T-cell (primary cell): ENCODE measurements at regions of chr4 and their contacts with region 1.

Region 1: GRCh38 chr4:81471588-81472288 is at the start of gene RASGEF1B:
- DNase-seq: peak; percentile 85 to 97 (median 94)
- ATAC-seq: peak; percentile 90 to 97 (median 93)
- H3K4me3 ChIP-seq: peak within 1 kb of the TSS; percentile 87 to 92
- H3K4me3 Mint-ChIP-seq: peak within 1 kb of the TSS; percentile 89 to 98 (median 97)
- H3K27ac ChIP-seq: peak within 1 kb of the TSS; percentile 99
- H3K27ac Mint-ChIP-seq: peak within 1 kb of the TSS; percentile 96 to 98
- H3K4me1 ChIP-seq: peaks cover 29 to 32% of the 10 kb centered on the region in 2 experiments
- H3K4me1 Mint-ChIP-seq: peaks cover 40 to 58% (median 43%) of the 10 kb centered on the region in 3 donors
- H3K27me3 ChIP-seq: peaks cover 0 to 7% of the 10 kb centered on the region in 2 experiments
- H3K27me3 Mint-ChIP-seq: no peaks in the 10 kb centered on the region
- total RNA-seq, gene RASGEF1B: 7.3 to 54.0 (median 8.1) TPM

Region 2: GRCh38 chr4:81272671-81273070 is 199.1 kb before region 1 on chr4:
- CTCF ChIA-PET with region 1: no interaction called
- POLR2A ChIA-PET with region 1: no interaction called
- DNase-seq: no peak
- ATAC-seq: no peak
- H3K4me3 ChIP-seq: no peak overlapping the region
- H3K4me3 Mint-ChIP-seq: no peak overlapping the region
- H3K27ac ChIP-seq: no peak overlapping the region
- H3K27ac Mint-ChIP-seq: no peak overlapping the region
- H3K4me1 ChIP-seq: no peaks in the 10 kb centered on the region
- H3K4me1 Mint-ChIP-seq: no peaks in the 10 kb centered on the region
- H3K27me3 ChIP-seq: no peaks in the 10 kb centered on the region
- H3K27me3 Mint-ChIP-seq: peaks cover 3 to 6% of the 10 kb centered on the region in 2 donors

Region 3: GRCh38 chr4:81491943-81492342 is 20.2 kb after region 1 on chr4:
- CTCF ChIA-PET with region 1: interaction called, 3 to 52 read pairs
- POLR2A ChIA-PET with region 1: interaction called, 13 to 67 read pairs
- DNase-seq: peak in 3 of 35 experiments; percentile 15 to 86 (median 40)
- ATAC-seq: peak; percentile 72 to 95 (median 88)
- H3K4me3 ChIP-seq: no peak overlapping the region
- H3K4me3 Mint-ChIP-seq: peak overlapping the region; percentile 2 to 49 (median 44)
- H3K27ac ChIP-seq: peak overlapping the region; percentile 96
- H3K27ac Mint-ChIP-seq: peak overlapping the region; percentile 74 to 87
- H3K4me1 ChIP-seq: peaks cover 19 to 34% of the 10 kb centered on the region in 2 experiments
- H3K4me1 Mint-ChIP-seq: peaks cover 49 to 53% (median 50%) of the 10 kb centered on the region in 3 donors
- H3K27me3 ChIP-seq: no peaks in the 10 kb centered on the region
- H3K27me3 Mint-ChIP-seq: no peaks in the 10 kb centered on the region

Region 4: GRCh38 chr4:81562093-81562492 is 90.4 kb after region 1 on chr4:
- CTCF ChIA-PET with region 1: interaction called, 3 to 8 read pairs
- POLR2A ChIA-PET with region 1: interaction called, 3 to 14 read pairs
- DNase-seq: peak in 1 of 35 experiments; percentile 61
- ATAC-seq: peak; percentile 69 to 98 (median 75)
- H3K4me3 ChIP-seq: no peak overlapping the region
- H3K4me3 Mint-ChIP-seq: peak overlapping the region in 1 of 3 donors; percentile 31
- H3K27ac ChIP-seq: peak overlapping the region; percentile 53
- H3K27ac Mint-ChIP-seq: peak overlapping the region; percentile 47 to 56
- H3K4me1 ChIP-seq: peaks cover 0 to 7% of the 10 kb centered on the region in 2 experiments
- H3K4me1 Mint-ChIP-seq: peaks cover 11 to 25% (median 14%) of the 10 kb centered on the region in 3 donors
- H3K27me3 ChIP-seq: no peaks in the 10 kb centered on the region
- H3K27me3 Mint-ChIP-seq: no peaks in the 10 kb centered on the region

Region 5: GRCh38 chr4:81844717-81845116 is 373.0 kb after region 1 on chr4:
- CTCF ChIA-PET with region 1: interaction called, 36 to 108 read pairs
- POLR2A ChIA-PET with region 1: interaction called in 1 of 2 experiments, 6 read pairs
- DNase-seq: peak; percentile 21 to 81 (median 56)
- ATAC-seq: peak; percentile 63 to 89 (median 85)
- H3K4me3 ChIP-seq: no peak overlapping the region
- H3K4me3 Mint-ChIP-seq: no peak overlapping the region
- H3K27ac ChIP-seq: no peak overlapping the region
- H3K27ac Mint-ChIP-seq: no peak overlapping the region
- H3K4me1 ChIP-seq: no peaks in the 10 kb centered on the region
- H3K4me1 Mint-ChIP-seq: peaks cover 0 to 3% (median 0%) of the 10 kb centered on the region in 3 donors
- H3K27me3 ChIP-seq: no peaks in the 10 kb centered on the region
- H3K27me3 Mint-ChIP-seq: peaks cover 0 to 2% of the 10 kb centered on the region in 2 donors

Region 6: DNA sequence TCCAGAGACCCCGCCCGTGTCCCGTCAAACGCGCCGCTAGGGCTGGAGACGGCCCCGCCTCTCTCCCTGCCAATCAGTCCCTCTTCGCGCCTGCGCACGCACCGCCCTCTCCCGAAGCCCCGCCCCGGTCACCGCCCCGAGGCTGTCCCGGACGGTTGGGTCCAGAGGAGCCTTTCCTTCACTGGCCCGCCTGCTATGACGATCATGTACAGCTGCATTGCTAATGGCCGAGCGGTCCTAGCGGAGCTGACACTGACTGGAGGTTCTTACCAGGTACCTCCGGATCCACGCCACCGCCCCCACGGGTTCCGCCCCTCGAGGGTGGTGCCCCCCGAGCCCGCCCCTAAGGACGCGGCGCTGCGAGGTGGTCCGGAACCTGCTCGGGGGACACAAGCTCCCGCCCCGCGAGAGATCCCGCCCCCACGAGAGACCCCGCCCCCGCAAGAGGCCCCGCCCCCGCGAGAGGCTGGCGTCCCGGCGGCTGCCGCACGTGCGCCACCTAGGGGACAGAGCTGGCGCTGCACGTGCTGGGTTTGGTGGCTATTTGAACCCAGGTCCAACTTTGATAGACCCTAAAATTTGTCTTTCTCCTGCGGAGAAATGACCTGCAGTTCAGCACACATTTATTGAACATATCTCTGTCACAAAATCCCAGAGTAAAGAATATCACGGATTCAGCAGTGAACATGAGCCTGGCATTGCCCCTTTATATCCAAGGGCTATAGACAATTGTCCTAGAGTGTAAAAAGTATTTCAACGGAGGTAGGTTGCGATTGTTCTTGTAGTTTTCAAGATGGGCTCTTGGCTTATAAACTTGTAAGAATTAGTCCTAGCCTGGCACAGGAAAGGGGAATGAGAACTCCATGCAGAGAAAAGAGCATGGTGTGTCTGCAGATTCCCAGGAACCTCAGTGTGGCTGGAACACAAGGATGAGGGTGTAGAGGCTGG is 813.4 kb after region 1 on chr4:
- CTCF ChIA-PET with region 1: interaction called in 1 of 2 experiments, 12 read pairs
- POLR2A ChIA-PET with region 1: interaction called in 1 of 2 experiments, 3 read pairs
- DNase-seq: peak; percentile 96 to 100 (median 98)
- ATAC-seq: peak; percentile 92 to 96 (median 94)
- H3K4me3 ChIP-seq: peak overlapping the region; percentile 63 to 68
- H3K4me3 Mint-ChIP-seq: peak overlapping the region; percentile 77 to 81 (median 80)
- H3K27ac ChIP-seq: peak overlapping the region; percentile 68
- H3K27ac Mint-ChIP-seq: peak overlapping the region; percentile 65 to 86
- H3K4me1 ChIP-seq: peaks cover 8 to 12% of the 10 kb centered on the region in 2 experiments
- H3K4me1 Mint-ChIP-seq: peaks cover 13 to 21% (median 16%) of the 10 kb centered on the region in 3 donors
- H3K27me3 ChIP-seq: no peaks in the 10 kb centered on the region
- H3K27me3 Mint-ChIP-seq: no peaks in the 10 kb centered on the region